ENCODE measurements at regions of chr19 and their contacts with region 1.

Region 1: GRCh38 chr19:33406521-33407139 is 33.1 kb downstream of the CEBPG start:
- DNase-seq: peak; percentile 72 to 78
- H3K4me3 ChIP-seq: no peak overlapping the region
- H3K27ac ChIP-seq: no peak overlapping the region
- H3K4me1 ChIP-seq: no peaks in the 10 kb centered on the region
- H3K27me3 ChIP-seq: no peaks in the 10 kb centered on the region
- CTCF ChIP-seq: peak; percentile 93 to 97 (median 96)
- POLR2A ChIP-seq: peak in 1 of 2 donors; percentile 18

Region 2: GRCh38 chr19:33241530-33242101 is 165.0 kb before region 1 on chr19:
- intact Hi-C with region 1: loop called (anchors 2 kb)
- DNase-seq: peak; percentile 27 to 28
- H3K4me3 ChIP-seq: no peak overlapping the region
- H3K27ac ChIP-seq: no peak overlapping the region
- H3K4me1 ChIP-seq: peaks cover 0 to 5% of the 10 kb centered on the region in 2 donors
- H3K27me3 ChIP-seq: no peaks in the 10 kb centered on the region
- CTCF ChIP-seq: peak; percentile 78 to 83 (median 80)
- POLR2A ChIP-seq: no peak

Region 3: DNA sequence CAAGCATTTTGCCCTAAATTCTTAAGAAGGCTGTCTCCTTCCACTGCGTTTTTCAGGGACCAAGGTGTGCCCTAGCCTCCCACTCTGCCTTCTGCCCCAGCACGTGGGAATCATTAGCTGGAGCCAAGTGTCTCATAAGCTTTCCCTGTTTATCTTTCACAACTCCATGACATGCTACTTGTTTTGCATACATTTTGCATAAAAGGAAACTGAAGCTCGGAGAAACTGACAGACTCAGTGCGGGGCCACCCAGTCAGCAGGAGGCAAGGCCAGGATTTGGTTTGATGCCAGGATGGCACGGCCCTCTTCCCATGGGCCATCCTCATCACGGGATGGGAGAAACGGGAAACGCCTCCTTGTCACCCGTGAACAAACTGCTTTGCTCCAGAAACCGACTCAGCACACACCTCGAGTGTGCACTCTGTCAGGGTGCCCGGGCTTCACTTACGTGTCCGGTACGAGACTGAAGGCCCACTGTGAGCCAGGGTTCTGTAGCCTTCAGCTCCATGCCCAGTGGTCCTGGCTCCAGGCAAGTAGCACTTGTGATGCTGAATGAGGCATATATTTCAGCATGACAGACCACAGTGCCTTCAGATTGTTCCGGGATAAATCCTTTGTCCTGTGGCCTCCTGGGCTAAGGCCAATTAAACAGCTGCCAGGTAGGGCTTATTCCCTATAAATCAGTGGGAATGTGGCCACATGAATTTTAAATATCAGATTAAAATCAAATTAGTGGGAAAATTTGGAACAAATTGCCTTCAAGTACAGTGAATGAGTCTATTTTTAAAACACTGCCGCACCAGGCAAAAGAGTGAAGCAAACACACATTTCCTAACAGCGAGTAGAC is 113.8 kb before region 1 on chr19:
- intact Hi-C with region 1: loop called (anchors 10 kb)
- DNase-seq: no peak
- H3K4me3 ChIP-seq: no peak overlapping the region
- H3K27ac ChIP-seq: peak overlapping the region in 1 of 2 donors; percentile 46
- H3K4me1 ChIP-seq: no peaks in the 10 kb centered on the region
- H3K27me3 ChIP-seq: no peaks in the 10 kb centered on the region
- CTCF ChIP-seq: no peak
- POLR2A ChIP-seq: no peak

Region 4: GRCh38 chr19:33521480-33522370 is 115.1 kb after region 1 on chr19 and contains the start of gene PEPD:
- intact Hi-C with region 1: no loop called
- DNase-seq: peak; percentile 93 to 94
- H3K4me3 ChIP-seq: peak within 1 kb of the TSS; percentile 46 to 93
- H3K27ac ChIP-seq: peak within 1 kb of the TSS; percentile 43 to 70
- H3K4me1 ChIP-seq: no peaks in the 10 kb centered on the region
- H3K27me3 ChIP-seq: no peaks in the 10 kb centered on the region
- CTCF ChIP-seq: no peak
- POLR2A ChIP-seq: peak; percentile 12 to 60
- total RNA-seq, gene PEPD: 26.1 to 47.0 (median 37.9) TPM

Region 5: DNA sequence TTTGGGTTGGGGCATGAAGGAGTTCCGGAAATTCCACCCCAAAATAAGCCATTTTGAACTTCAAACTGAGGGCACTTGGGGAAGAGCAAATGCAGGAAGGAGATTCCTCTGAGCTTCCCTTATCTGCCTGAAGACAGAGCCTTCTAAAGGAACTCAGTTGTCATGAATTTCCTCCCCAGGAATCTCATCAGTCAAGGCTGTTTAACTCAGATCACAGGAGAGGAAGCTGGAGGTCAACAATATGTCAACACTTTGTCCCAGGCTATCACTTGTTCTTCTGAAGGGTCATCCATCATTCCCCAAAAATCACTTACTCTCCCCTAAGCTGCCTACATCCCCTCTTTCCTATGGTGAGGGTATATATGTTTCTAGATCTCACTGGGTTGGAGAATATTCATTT is 189.2 kb after region 1 on chr19:
- intact Hi-C with region 1: no loop called
- DNase-seq: no peak
- H3K4me3 ChIP-seq: no peak overlapping the region
- H3K27ac ChIP-seq: no peak overlapping the region
- H3K4me1 ChIP-seq: no peaks in the 10 kb centered on the region
- H3K27me3 ChIP-seq: no peaks in the 10 kb centered on the region
- CTCF ChIP-seq: no peak
- POLR2A ChIP-seq: no peak

Region 6: GRCh38 chr19:34804115-34804514 is 1397.5 kb after region 1 on chr19:
- intact Hi-C with region 1: loop called (anchors 5 kb)
- DNase-seq: no peak
- H3K4me3 ChIP-seq: no peak overlapping the region
- H3K27ac ChIP-seq: no peak overlapping the region
- H3K4me1 ChIP-seq: no peaks in the 10 kb centered on the region
- H3K27me3 ChIP-seq: no peaks in the 10 kb centered on the region
- CTCF ChIP-seq: no peak
- POLR2A ChIP-seq: no peak

Measured in uterus (tissue), 4 donors.